Left cardiac atrium (tissue), 4 donors: ENCODE measurements at regions of chr6 and their contacts with region 1.

Region 1: GRCh38 chr6:63571881-63572732 is at the starts of genes LOC128125822 and PTP4A1:
- DNase-seq: peak; percentile 99
- ATAC-seq: peak; percentile 97 to 98
- total RNA-seq, gene PTP4A1: 24.9 to 41.1 TPM

Region 2: DNA sequence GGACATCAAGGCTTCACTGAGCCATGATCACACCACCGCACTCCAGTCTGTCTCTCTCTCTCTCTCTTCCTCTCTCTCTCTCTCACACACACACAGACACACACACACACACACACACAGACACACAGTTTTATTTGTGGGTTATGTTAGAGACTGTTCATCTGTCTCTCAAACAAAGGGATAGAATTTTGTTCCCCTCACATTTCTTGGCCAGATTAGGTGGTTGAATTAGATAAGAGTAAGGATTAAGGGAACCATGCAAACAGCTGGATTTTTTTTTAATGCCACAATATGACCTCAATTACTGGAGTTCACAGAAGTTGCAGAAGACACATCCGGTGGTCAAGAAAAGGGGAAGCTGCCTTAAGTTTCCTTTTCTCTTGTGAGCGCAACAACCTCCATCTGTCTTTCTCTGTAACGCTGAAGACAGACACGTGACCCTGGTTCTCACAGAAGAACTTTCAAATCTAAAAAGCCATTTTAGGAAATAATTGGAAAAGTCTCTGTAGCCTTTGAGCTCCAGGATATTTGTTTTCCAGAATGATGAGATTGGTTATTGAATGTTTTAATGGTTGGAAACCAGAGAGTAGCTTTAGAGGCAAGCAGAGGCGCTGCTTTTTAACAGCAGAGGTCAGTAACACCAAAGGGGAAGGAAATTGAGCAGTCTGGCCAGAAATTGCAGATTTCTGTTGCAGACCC is 219.4 kb before region 1 on chr6:
- intact Hi-C with region 1: loop called in 1 of 2 experiments (anchors 10 kb)
- DNase-seq: no peak
- ATAC-seq: peak; percentile 74 to 77

Region 3: GRCh38 chr6:63589927-63590411 is 17.9 kb after region 1 on chr6:
- intact Hi-C with region 1: no loop called
- DNase-seq: no peak
- ATAC-seq: no peak

Region 4: GRCh38 chr6:63635588-63636517 is 63.7 kb after region 1 on chr6 and contains the start of gene PHF3:
- intact Hi-C with region 1: loop called in 1 of 2 experiments (anchors 10 kb)
- DNase-seq: peak; percentile 94
- ATAC-seq: peak; percentile 95 to 98
- total RNA-seq, gene PHF3: 30.8 to 35.3 TPM